H1 (cell line): ENCODE measurements at regions of chr10 and their contacts with region 1.

Region 1: DNA sequence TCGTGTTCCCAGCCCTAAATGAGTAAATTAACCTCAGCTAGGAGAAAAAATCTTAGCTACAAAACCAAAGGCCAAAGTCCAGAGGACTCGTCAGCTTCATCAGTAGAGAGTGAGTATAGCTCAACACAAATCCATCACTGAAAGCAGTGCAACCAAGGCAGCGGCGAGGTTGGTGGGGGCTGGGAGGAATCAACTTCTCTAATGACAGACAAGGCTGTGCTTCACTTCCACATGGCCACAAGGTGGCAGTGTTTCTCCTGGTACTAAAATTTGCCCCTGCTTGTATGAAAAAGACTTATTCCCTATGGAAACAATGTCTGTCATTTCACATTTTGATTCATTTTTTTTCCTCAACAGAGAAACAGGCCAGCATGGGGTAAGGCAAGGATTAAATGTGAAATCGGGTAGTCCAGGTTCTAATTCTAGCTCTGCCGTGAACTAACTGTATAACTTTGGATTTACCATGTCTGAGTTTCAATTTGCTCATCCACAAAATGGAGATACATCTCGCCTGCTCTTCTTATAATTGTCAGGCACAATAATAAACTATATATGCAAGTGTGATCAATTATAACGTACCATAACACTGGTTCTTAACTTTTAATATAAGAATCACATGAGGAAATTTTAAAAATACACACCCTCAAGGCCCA is 39.3 kb downstream of the FAS start:
- DNase-seq: peak in 1 of 2 experiments; percentile 71
- H3K4me3 ChIP-seq: no peak overlapping the region
- H3K27ac ChIP-seq: no peak overlapping the region
- H3K4me1 ChIP-seq: peaks cover 3 to 11% (median 6%) of the 10 kb centered on the region in 4 experiments; a peak in 5 of 7 replicates
- H3K27me3 ChIP-seq: no peaks in the 10 kb centered on the region
- CTCF ChIP-seq: peak; percentile 61 to 83 (median 82)
- EP300 ChIP-seq: no peak
- POLR2A ChIP-seq: no peak
- RAD21 ChIP-seq: peak; percentile 92

Region 2: DNA sequence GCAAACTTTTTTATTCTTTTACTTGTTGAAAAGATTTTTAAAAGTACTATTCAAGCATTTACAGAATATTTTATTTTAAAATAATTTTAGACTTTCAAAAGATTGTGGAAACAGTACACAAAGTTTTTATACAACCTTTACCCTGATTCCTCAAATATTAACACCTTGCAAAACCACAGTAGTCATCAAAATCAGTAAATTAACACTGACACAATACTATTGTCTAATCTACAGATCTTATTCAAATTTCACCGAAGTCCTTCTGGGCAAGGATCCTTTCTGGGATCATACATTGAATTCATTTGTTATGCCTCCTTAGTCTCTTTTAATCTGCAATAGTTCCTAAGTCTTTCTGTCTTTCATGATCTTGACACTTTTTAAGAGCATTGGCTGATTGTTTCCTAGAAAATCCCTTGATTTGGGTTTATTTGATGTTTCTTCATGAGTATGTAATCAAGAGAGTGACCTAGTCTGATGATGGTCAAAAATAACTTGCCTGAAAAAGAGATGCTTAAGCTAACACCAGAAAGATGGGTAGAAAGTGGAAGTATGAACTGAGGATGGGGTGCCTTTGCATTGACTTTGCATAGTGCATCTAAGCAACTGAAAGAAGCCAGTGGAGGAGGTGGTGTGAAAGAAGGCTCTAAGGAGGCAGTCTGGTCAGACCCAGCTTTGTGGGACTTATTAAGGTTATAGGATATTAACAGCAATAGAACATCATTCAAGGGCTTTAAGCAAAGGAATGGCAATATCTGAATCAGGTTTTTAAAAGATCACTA is 140.2 kb before region 1 on chr10:
- CTCF ChIA-PET with region 1: no interaction called
- POLR2A ChIA-PET with region 1: no interaction called
- DNase-seq: no peak
- H3K4me3 ChIP-seq: no peak overlapping the region
- H3K27ac ChIP-seq: no peak overlapping the region
- H3K4me1 ChIP-seq: peaks cover 0 to 5% (median 3%) of the 10 kb centered on the region in 4 experiments; a peak in 3 of 7 replicates
- H3K27me3 ChIP-seq: no peaks in the 10 kb centered on the region
- CTCF ChIP-seq: no peak
- EP300 ChIP-seq: no peak
- POLR2A ChIP-seq: no peak
- RAD21 ChIP-seq: no peak

Region 3: GRCh38 chr10:88944813-88945212 is 85.1 kb before region 1 on chr10:
- CTCF ChIA-PET with region 1: interaction called, 10 read pairs
- POLR2A ChIA-PET with region 1: no interaction called
- DNase-seq: no peak
- H3K4me3 ChIP-seq: no peak overlapping the region
- H3K27ac ChIP-seq: no peak overlapping the region
- H3K4me1 ChIP-seq: no peaks in the 10 kb centered on the region
- H3K27me3 ChIP-seq: no peaks in the 10 kb centered on the region
- CTCF ChIP-seq: no peak
- EP300 ChIP-seq: no peak
- POLR2A ChIP-seq: no peak
- RAD21 ChIP-seq: no peak

Region 4: GRCh38 chr10:89007129-89007893 is 22.6 kb before region 1 on chr10:
- CTCF ChIA-PET with region 1: interaction called, 10 read pairs
- POLR2A ChIA-PET with region 1: no interaction called
- DNase-seq: no peak
- H3K4me3 ChIP-seq: no peak overlapping the region
- H3K27ac ChIP-seq: no peak overlapping the region
- H3K4me1 ChIP-seq: peaks cover 0 to 3% (median 0%) of the 10 kb centered on the region in 4 experiments; a peak in 1 of 7 replicates
- H3K27me3 ChIP-seq: no peaks in the 10 kb centered on the region
- CTCF ChIP-seq: no peak
- EP300 ChIP-seq: no peak
- POLR2A ChIP-seq: no peak
- RAD21 ChIP-seq: no peak

Region 5: GRCh38 chr10:89047397-89047796 is 17.5 kb after region 1 on chr10:
- CTCF ChIA-PET with region 1: interaction called, 30 read pairs
- POLR2A ChIA-PET with region 1: no interaction called
- DNase-seq: no peak
- H3K4me3 ChIP-seq: no peak overlapping the region
- H3K27ac ChIP-seq: no peak overlapping the region
- H3K4me1 ChIP-seq: peaks cover 0 to 3% (median 0%) of the 10 kb centered on the region in 4 experiments; a peak in 1 of 7 replicates
- H3K27me3 ChIP-seq: no peaks in the 10 kb centered on the region
- CTCF ChIP-seq: no peak
- EP300 ChIP-seq: no peak
- POLR2A ChIP-seq: no peak
- RAD21 ChIP-seq: no peak

Region 6: DNA sequence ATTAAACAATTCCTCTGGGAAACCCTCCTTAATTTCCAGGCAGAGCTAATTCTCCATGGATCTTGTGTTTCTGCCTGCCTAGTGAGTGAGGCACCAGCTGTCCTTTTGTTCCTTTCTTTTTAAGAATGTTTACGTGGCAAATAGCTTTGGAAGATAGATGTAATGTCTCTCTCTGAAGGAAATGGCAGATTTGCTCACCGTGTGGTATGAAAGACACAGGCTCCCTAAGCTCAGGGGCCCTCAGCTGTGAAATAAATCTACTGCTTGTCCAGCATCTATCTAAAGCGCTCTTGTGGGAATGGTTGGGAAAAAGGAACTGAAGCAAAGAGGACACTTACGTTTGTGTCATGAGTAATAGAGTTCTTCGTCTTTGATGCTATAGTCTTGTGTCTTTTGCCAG is 25.2 kb after region 1 on chr10:
- CTCF ChIA-PET with region 1: interaction called, 15 read pairs
- POLR2A ChIA-PET with region 1: interaction called, 3 read pairs
- DNase-seq: no peak
- H3K4me3 ChIP-seq: no peak overlapping the region
- H3K27ac ChIP-seq: no peak overlapping the region
- H3K4me1 ChIP-seq: peaks cover 0 to 3% (median 0%) of the 10 kb centered on the region in 4 experiments; a peak in 1 of 7 replicates
- H3K27me3 ChIP-seq: no peaks in the 10 kb centered on the region
- CTCF ChIP-seq: no peak
- EP300 ChIP-seq: no peak
- POLR2A ChIP-seq: no peak
- RAD21 ChIP-seq: no peak

Region 7: DNA sequence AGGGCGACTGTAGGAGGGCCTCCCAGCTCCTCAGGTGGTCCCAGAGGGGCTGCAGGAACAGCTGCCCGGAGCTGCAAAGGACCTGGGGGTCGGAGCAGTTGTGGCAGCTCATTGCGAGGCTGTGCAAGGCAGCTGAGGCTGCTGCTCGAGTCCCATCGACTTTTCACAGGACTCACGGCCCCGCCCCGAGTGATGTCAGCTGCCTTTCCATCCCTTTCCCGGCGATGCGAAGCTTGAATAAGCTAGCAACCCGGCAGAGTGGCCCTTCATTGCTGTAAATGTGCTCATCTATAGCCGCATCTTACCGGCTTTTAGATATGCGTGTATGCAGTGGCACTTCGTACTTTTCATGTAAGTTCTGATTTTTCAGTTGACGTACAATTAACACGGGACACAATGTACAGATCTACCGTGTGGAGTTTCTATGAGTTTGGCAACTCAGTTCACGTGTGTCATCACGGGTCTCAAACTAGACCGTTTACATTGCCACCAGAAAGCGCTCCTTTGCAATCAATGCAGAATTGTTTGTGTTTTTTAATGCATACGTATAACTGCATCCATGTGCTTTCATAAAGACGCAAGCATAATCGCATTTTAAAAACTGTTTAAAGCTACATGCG is 177.4 kb after region 1 on chr10 and contains the start of gene CH25H:
- CTCF ChIA-PET with region 1: interaction called, 67 read pairs
- POLR2A ChIA-PET with region 1: interaction called, 3 read pairs
- DNase-seq: no peak
- H3K4me3 ChIP-seq: peak within 1 kb of the TSS; percentile 47 to 65 (median 52)
- H3K27ac ChIP-seq: no peak within 1 kb of the TSS
- H3K4me1 ChIP-seq: peaks cover 0 to 16% (median 9%) of the 10 kb centered on the region in 4 experiments; a peak in 6 of 7 replicates
- H3K27me3 ChIP-seq: peaks cover 9 to 46% (median 37%) of the 10 kb centered on the region in 4 experiments
- CTCF ChIP-seq: no peak
- EP300 ChIP-seq: no peak
- POLR2A ChIP-seq: no peak
- RAD21 ChIP-seq: no peak
- total RNA-seq, gene CH25H: 0.56 TPM in 1 of 2 replicates, not detected in the other

Region 8: GRCh38 chr10:89256340-89256739 is 226.4 kb after region 1 on chr10:
- CTCF ChIA-PET with region 1: no interaction called
- POLR2A ChIA-PET with region 1: no interaction called
- DNase-seq: no peak
- H3K4me3 ChIP-seq: no peak overlapping the region
- H3K27ac ChIP-seq: no peak overlapping the region
- H3K4me1 ChIP-seq: peaks cover 0 to 9% (median 4%) of the 10 kb centered on the region in 4 experiments; a peak in 6 of 7 replicates
- H3K27me3 ChIP-seq: no peaks in the 10 kb centered on the region
- CTCF ChIP-seq: no peak
- EP300 ChIP-seq: no peak
- POLR2A ChIP-seq: no peak
- RAD21 ChIP-seq: no peak